BJ (cell line): ENCODE measurements at regions of chr1 and their contacts with region 1.

Region 1: GRCh38 chr1:50929376-50929958 is 30.6 kb downstream of the FAF1 start:
- DNase-seq: no peak
- H3K4me3 ChIP-seq: no peak overlapping the region
- H3K27me3 ChIP-seq: no peaks in the 10 kb centered on the region
- CTCF ChIP-seq: peak; percentile 45

Region 2: DNA sequence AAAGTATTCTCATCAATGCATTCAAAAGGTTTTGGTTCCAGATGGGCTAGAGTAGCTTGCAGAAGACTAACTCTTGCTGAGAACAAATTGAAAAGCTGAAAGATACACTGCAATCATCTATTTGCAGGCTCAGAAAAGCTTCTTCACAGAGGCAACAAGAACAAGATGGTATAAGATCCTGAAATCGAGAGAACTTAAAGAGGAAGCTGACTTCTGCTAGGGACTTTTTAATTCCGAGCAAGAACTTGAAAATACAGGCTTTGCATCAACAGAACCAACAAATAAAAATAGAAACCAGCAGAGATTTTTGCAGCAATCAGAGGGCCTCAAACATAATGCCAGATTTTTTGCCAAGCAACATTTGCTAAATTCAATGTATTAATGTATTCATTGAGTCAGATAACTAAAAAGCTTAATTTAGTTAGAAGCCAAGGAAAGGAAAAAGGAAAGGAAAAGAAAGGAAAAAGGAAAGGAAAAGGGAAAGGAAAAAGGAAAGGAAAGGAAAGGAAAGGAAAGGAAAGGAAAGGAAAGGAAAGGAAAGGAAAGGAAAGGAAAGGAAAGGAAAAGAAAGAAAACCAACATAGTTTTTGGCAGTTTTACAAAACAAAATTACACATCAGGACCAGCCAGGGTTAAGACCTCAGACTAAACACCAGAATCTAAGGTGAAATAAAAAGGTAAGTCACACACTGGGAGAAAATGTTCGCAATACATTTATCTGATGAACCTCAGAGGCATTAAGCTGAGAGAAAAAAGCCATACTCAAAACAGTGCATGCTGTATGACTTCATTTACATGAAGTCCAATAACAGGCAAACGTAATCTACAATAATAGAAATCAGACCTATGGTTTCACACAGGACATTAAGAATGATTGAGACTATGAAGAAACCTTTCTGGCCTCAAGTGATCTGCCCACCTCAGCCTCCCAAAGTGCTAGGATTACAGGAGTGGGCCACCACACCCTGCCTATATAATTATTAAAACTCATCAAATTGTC is 12.0 kb before region 1 on chr1:
- CTCF ChIA-PET with region 1: interaction called, 10 read pairs
- POLR2A ChIA-PET with region 1: no interaction called
- DNase-seq: no peak
- H3K4me3 ChIP-seq: no peak overlapping the region
- H3K27me3 ChIP-seq: no peaks in the 10 kb centered on the region
- CTCF ChIP-seq: no peak

Region 3: DNA sequence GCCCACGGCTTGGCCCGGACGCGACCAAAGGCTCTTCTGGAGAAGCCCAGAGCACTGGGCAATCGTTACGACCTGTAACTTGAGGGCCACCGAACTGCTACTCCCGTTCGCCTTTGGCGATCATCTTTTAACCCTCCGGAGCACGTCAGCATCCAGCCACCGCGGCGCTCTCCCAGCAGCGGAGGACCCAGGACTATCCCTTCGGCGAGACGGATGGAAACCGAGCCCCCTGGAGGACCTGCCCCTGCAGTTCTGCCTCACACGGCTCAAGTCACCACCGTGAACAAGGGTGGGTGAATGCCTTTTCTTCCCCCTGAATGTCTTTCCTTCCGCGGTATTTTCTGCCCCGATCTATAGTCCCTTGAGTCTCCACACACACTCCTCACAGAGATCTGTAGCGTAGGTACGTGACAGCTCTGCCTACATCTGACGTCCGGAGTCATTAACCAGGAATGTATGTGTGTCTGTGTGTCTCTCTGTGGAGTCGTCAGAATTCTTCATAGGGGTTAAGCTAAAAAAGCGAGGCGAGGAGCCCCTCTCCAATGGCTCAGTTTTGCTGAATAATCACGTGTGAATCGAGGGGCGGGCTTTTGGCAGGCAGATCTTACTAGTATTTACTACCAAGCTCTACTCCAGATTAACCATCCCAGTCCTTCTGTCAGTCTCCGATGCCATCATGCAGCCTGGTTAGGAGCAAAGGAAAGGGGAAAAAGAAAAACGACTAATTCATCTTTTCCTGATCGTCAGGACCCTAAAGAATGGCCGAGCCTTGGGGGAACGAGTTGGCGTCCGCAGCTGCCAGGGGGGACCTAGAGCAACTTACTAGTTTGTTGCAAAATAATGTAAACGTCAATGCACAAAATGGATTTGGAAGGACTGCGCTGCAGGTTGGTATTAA is 40.4 kb after region 1 on chr1 and contains the start of gene CDKN2C:
- CTCF ChIA-PET with region 1: interaction called, 11 read pairs
- POLR2A ChIA-PET with region 1: no interaction called
- DNase-seq: peak; percentile 77
- H3K4me3 ChIP-seq: peak within 1 kb of the TSS; percentile 53
- H3K27me3 ChIP-seq: no peaks in the 10 kb centered on the region
- CTCF ChIP-seq: peak; percentile 23
- polyA plus RNA-seq, gene CDKN2C: 21.3 and 24.6 TPM in 2 replicates